ENCODE measurements at regions of chr5 and their contacts with region 1.

Region 1: DNA sequence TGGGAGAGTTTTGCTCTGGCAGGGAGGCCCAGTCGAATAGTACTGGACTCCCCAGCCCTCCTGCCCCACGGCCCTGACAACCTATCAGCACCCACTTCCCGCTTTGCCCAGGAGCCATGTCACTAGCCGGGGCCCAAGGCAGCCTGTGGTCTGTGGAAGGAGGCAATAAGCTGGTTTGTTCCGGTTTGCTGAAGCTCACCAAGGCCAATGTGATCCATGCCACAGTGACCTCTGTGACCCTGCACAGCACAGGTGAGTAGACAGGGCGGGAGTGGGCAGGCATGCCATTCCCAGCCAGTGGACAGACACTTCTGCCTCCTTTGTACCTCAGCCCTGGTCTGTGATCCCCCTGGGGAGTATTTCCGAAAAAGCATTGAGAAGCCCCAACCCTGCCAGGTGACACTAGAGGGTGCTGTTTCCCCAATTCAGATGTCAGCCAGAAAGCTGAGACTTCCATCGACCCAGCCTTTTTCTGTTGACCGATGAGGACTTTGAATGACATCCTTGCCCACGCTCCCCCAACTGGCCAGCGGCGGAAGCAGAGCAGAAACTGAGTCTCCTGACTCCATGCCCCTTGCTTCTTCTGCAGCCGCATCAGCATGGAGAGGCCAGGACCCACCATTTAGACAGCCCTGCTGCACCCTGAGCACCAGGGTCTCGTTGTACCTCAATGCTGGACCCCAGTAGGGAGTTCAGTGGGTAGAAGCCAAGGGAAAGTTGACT is 9.6 kb downstream of the PCYOX1L start:
- DNase-seq: peak; percentile 87
- H3K4me3 Mint-ChIP-seq: no peak overlapping the region
- H3K27ac Mint-ChIP-seq: no peak overlapping the region
- H3K4me1 Mint-ChIP-seq: peaks cover 8% of the 10 kb centered on the region
- H3K27me3 Mint-ChIP-seq: no peaks in the 10 kb centered on the region
- CTCF ChIP-seq: peak; percentile 85

Region 2: GRCh38 chr5:149128023-149128875 is 239.2 kb before region 1 on chr5:
- CTCF ChIA-PET with region 1: interaction called, 4 read pairs
- POLR2A ChIA-PET with region 1: no interaction called
- intact Hi-C with region 1: loop called (anchors 2 kb)
- DNase-seq: peak; percentile 80
- H3K4me3 Mint-ChIP-seq: peak overlapping the region; percentile 67
- H3K27ac Mint-ChIP-seq: peak overlapping the region; percentile 84
- H3K4me1 Mint-ChIP-seq: peaks cover 73% of the 10 kb centered on the region
- H3K27me3 Mint-ChIP-seq: no peaks in the 10 kb centered on the region
- CTCF ChIP-seq: peak; percentile 87

Region 3: GRCh38 chr5:149317281-149318048 is 49.9 kb before region 1 on chr5:
- CTCF ChIA-PET with region 1: interaction called, 1,231 read pairs
- POLR2A ChIA-PET with region 1: interaction called, 43 read pairs
- intact Hi-C with region 1: loop called (anchors 1 kb)
- DNase-seq: peak; percentile 71
- H3K4me3 Mint-ChIP-seq: no peak overlapping the region
- H3K27ac Mint-ChIP-seq: no peak overlapping the region
- H3K4me1 Mint-ChIP-seq: peaks cover 12% of the 10 kb centered on the region
- H3K27me3 Mint-ChIP-seq: no peaks in the 10 kb centered on the region
- CTCF ChIP-seq: peak; percentile 78

Region 4: GRCh38 chr5:149387081-149387631 is 19.7 kb after region 1 on chr5:
- CTCF ChIA-PET with region 1: interaction called, 105 read pairs
- POLR2A ChIA-PET with region 1: interaction called, 3 read pairs
- intact Hi-C with region 1: no loop called
- DNase-seq: no peak
- H3K4me3 Mint-ChIP-seq: no peak overlapping the region
- H3K27ac Mint-ChIP-seq: no peak overlapping the region
- H3K4me1 Mint-ChIP-seq: no peaks in the 10 kb centered on the region
- H3K27me3 Mint-ChIP-seq: no peaks in the 10 kb centered on the region
- CTCF ChIP-seq: no peak

Region 5: DNA sequence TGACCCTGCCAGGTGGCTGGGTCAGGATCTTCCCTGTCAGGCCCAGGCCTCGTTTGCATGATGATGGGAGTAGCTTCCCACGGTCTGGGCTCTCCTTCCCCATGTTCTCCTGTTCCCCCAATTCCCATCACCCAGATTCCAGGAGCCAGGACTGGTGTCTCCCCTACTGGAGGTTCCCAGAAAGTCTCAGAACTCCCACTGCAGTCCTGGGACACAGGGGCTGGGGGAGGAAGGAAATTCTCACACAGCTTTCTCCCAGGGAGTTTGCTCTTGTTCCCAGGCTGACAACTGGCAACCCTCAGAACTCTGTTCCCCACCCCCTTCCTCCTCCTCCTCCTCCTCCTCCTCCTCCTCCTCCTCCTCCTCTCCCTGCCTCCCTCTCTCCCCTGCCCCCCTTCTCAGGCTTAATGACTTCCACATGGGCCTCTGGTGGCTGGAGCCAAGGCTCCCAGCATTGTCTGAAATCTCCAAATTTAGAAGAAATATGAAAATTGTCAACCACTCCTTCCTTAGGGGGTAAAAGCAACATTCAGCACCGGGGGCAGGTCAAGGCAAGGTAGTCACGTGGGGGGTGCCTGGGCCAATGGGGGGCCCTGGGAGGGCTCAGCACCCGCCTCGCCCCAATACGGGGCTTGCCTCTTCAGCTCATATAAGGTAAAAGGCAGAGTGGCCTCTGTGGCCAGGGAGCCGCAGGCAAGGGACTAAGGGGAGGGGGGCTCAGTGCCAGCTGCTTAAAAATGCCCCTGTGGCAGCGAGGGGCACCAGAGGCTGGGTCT is 39.0 kb after region 1 on chr5:
- CTCF ChIA-PET with region 1: interaction called, 12 read pairs
- POLR2A ChIA-PET with region 1: no interaction called
- intact Hi-C with region 1: no loop called
- DNase-seq: no peak
- H3K4me3 Mint-ChIP-seq: no peak overlapping the region
- H3K27ac Mint-ChIP-seq: no peak overlapping the region
- H3K4me1 Mint-ChIP-seq: no peaks in the 10 kb centered on the region
- H3K27me3 Mint-ChIP-seq: peaks cover 11% of the 10 kb centered on the region
- CTCF ChIP-seq: no peak

Region 6: GRCh38 chr5:149434162-149435014 is 67.0 kb after region 1 on chr5:
- CTCF ChIA-PET with region 1: interaction called, 662 read pairs
- POLR2A ChIA-PET with region 1: no interaction called
- intact Hi-C with region 1: loop called (anchors 1 kb)
- DNase-seq: peak; percentile 75
- H3K4me3 Mint-ChIP-seq: no peak overlapping the region
- H3K27ac Mint-ChIP-seq: no peak overlapping the region
- H3K4me1 Mint-ChIP-seq: peaks cover 13% of the 10 kb centered on the region
- H3K27me3 Mint-ChIP-seq: no peaks in the 10 kb centered on the region
- CTCF ChIP-seq: peak; percentile 98

Region 7: GRCh38 chr5:149878039-149878747 is 510.8 kb after region 1 on chr5:
- CTCF ChIA-PET with region 1: no interaction called
- POLR2A ChIA-PET with region 1: no interaction called
- intact Hi-C with region 1: no loop called
- DNase-seq: peak; percentile 75
- H3K4me3 Mint-ChIP-seq: no peak overlapping the region
- H3K27ac Mint-ChIP-seq: no peak overlapping the region
- H3K4me1 Mint-ChIP-seq: peaks cover 16% of the 10 kb centered on the region
- H3K27me3 Mint-ChIP-seq: no peaks in the 10 kb centered on the region
- CTCF ChIP-seq: no peak

Measured in MCF 10A (cell line).